Stomach (tissue), 19 donors: ENCODE measurements at regions of chr6 and their contacts with region 1.

Region 1: GRCh38 chr6:134892362-134892761 is 57.5 kb downstream of the ALDH8A1 start:
- DNase-seq: no peak
- H3K4me3 ChIP-seq: no peak overlapping the region
- H3K27ac ChIP-seq: no peak overlapping the region
- H3K4me1 ChIP-seq: no peaks in the 10 kb centered on the region
- H3K27me3 ChIP-seq: no peaks in the 10 kb centered on the region
- CTCF ChIP-seq: no peak
- EP300 ChIP-seq: no peak
- POLR2A ChIP-seq: no peak

Region 2: GRCh38 chr6:134152767-134153485 is 739.4 kb before region 1 on chr6:
- intact Hi-C with region 1: loop called (anchors 5 kb)
- DNase-seq: peak in 1 of 2 donors; percentile 54
- H3K4me3 ChIP-seq: no peak overlapping the region
- H3K27ac ChIP-seq: no peak overlapping the region
- H3K4me1 ChIP-seq: no peaks in the 10 kb centered on the region
- H3K27me3 ChIP-seq: no peaks in the 10 kb centered on the region
- CTCF ChIP-seq: no peak
- EP300 ChIP-seq: no peak
- POLR2A ChIP-seq: no peak

Region 3: GRCh38 chr6:134809132-134809531 is 83.2 kb before region 1 on chr6:
- intact Hi-C with region 1: no loop called
- DNase-seq: no peak
- H3K4me3 ChIP-seq: no peak overlapping the region
- H3K27ac ChIP-seq: no peak overlapping the region
- H3K4me1 ChIP-seq: no peaks in the 10 kb centered on the region
- H3K27me3 ChIP-seq: no peaks in the 10 kb centered on the region
- CTCF ChIP-seq: no peak
- EP300 ChIP-seq: no peak
- POLR2A ChIP-seq: no peak